Naive thymus-derived CD4-positive, alpha-beta T cell (primary cell): ENCODE measurements at regions of chr16 and their contacts with region 1.

Region 1: DNA sequence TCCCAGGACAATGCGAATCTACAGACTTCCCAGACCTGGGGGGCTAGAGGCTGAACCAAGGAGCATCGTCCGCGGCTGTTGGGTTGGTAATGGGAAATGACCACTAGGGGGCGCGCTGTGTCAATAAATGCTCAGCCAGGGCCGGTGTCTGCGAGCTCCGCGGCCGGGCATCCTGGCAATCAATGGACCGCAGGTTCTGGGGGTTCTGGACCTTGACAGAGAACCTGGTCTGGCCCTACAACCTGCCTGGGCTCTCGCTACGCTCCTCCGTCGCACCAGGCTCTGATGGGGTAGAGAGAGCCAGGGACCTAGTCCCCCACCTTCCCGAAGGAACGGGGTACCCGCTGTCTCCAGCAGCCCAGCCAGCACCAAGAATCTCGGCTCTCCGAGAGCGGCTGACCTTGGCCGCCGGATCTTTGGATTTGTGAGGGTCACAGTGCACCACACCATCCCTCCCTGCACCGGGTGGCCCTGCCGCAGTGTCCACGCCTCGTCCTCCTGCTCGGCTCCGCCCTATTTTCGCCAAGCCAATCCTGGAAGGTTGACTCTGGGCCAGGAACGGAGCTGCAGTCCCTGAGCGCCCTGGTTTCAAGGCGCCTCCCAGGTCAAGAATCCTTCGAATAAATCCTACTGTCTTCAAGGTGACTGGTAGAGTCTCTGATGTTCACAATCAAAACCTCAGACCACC is 20.4 kb upstream of the BEAN1 start:
- DNase-seq: peak; percentile 70 to 92 (median 84)
- ATAC-seq: peak; percentile 90
- H3K4me3 ChIP-seq: peak overlapping the region; percentile 76
- H3K4me3 Mint-ChIP-seq: peak overlapping the region; percentile 86 to 94 (median 89)
- H3K27ac ChIP-seq: no peak overlapping the region
- H3K27ac Mint-ChIP-seq: peak overlapping the region; percentile 34 to 97 (median 79)
- H3K4me1 ChIP-seq: peaks cover 19 to 27% of the 10 kb centered on the region in 2 donors
- H3K4me1 Mint-ChIP-seq: peaks cover 14 to 40% (median 33%) of the 10 kb centered on the region in 7 donors
- H3K27me3 ChIP-seq: no peaks in the 10 kb centered on the region
- H3K27me3 Mint-ChIP-seq: peaks cover 0 to 24% (median 5%) of the 10 kb centered on the region in 5 donors

Region 2: GRCh38 chr16:66304151-66304550 is 102.5 kb before region 1 on chr16:
- CTCF ChIA-PET with region 1: no interaction called
- POLR2A ChIA-PET with region 1: no interaction called
- intact Hi-C with region 1: no loop called
- DNase-seq: peak in 1 of 9 donors; percentile 7
- ATAC-seq: no peak
- H3K4me3 ChIP-seq: no peak overlapping the region
- H3K4me3 Mint-ChIP-seq: no peak overlapping the region
- H3K27ac ChIP-seq: no peak overlapping the region
- H3K27ac Mint-ChIP-seq: no peak overlapping the region
- H3K4me1 ChIP-seq: no peaks in the 10 kb centered on the region
- H3K4me1 Mint-ChIP-seq: peaks cover 0 to 11% (median 7%) of the 10 kb centered on the region in 7 donors
- H3K27me3 ChIP-seq: no peaks in the 10 kb centered on the region
- H3K27me3 Mint-ChIP-seq: peaks cover 0 to 14% (median 5%) of the 10 kb centered on the region in 5 donors

Region 3: GRCh38 chr16:66483689-66484481 is 77.2 kb after region 1 on chr16:
- CTCF ChIA-PET with region 1: interaction called, 84 read pairs
- POLR2A ChIA-PET with region 1: interaction called, 3 read pairs
- intact Hi-C with region 1: loop called (anchors 1 kb)
- DNase-seq: peak; percentile 55 to 79 (median 64)
- ATAC-seq: peak; percentile 84
- H3K4me3 ChIP-seq: no peak overlapping the region
- H3K4me3 Mint-ChIP-seq: peak overlapping the region in 1 of 10 donors; percentile 9
- H3K27ac ChIP-seq: no peak overlapping the region
- H3K27ac Mint-ChIP-seq: peak overlapping the region in 4 of 9 donors; percentile 44 to 88 (median 68)
- H3K4me1 ChIP-seq: peaks cover 7 to 8% of the 10 kb centered on the region in 2 donors
- H3K4me1 Mint-ChIP-seq: peaks cover 6 to 40% (median 17%) of the 10 kb centered on the region in 7 donors
- H3K27me3 ChIP-seq: no peaks in the 10 kb centered on the region
- H3K27me3 Mint-ChIP-seq: no peaks in the 10 kb centered on the region

Region 4: GRCh38 chr16:66552286-66553177 is 145.9 kb after region 1 on chr16 and contains the start of gene CKLF:
- CTCF ChIA-PET with region 1: interaction called, 4 read pairs
- POLR2A ChIA-PET with region 1: interaction called, 10 read pairs
- intact Hi-C with region 1: no loop called
- DNase-seq: peak; percentile 84 to 96 (median 92)
- ATAC-seq: peak; percentile 83
- H3K4me3 ChIP-seq: peak within 1 kb of the TSS; percentile 94
- H3K4me3 Mint-ChIP-seq: peak within 1 kb of the TSS; percentile 92 to 99 (median 95)
- H3K27ac ChIP-seq: peak within 1 kb of the TSS; percentile 77
- H3K27ac Mint-ChIP-seq: peak within 1 kb of the TSS; percentile 91 to 97 (median 94)
- H3K4me1 ChIP-seq: peaks cover 49 to 68% of the 10 kb centered on the region in 2 donors
- H3K4me1 Mint-ChIP-seq: peaks cover 59 to 85% (median 80%) of the 10 kb centered on the region in 7 donors
- H3K27me3 ChIP-seq: no peaks in the 10 kb centered on the region
- H3K27me3 Mint-ChIP-seq: peaks cover 0 to 2% (median 0%) of the 10 kb centered on the region in 5 donors
- total RNA-seq, gene CKLF: 24.1 to 160 (median 42.9) TPM

Region 5: GRCh38 chr16:66608241-66609138 is 201.8 kb after region 1 on chr16:
- CTCF ChIA-PET with region 1: interaction called, 7 read pairs
- POLR2A ChIA-PET with region 1: interaction called, 6 read pairs
- intact Hi-C with region 1: loop called (anchors 1 kb)
- DNase-seq: peak; percentile 66 to 85 (median 78)
- ATAC-seq: peak; percentile 52
- H3K4me3 ChIP-seq: no peak overlapping the region
- H3K4me3 Mint-ChIP-seq: peak overlapping the region in 8 of 10 donors; percentile 6 to 82 (median 34)
- H3K27ac ChIP-seq: peak overlapping the region; percentile 40
- H3K27ac Mint-ChIP-seq: peak overlapping the region in 8 of 9 donors; percentile 45 to 85 (median 79)
- H3K4me1 ChIP-seq: peaks cover 17 to 34% of the 10 kb centered on the region in 2 donors
- H3K4me1 Mint-ChIP-seq: peaks cover 19 to 37% (median 35%) of the 10 kb centered on the region in 7 donors
- H3K27me3 ChIP-seq: no peaks in the 10 kb centered on the region
- H3K27me3 Mint-ChIP-seq: peaks cover 0 to 3% (median 0%) of the 10 kb centered on the region in 5 donors

Region 6: GRCh38 chr16:66728117-66728787 is 321.6 kb after region 1 on chr16:
- CTCF ChIA-PET with region 1: interaction called, 4 read pairs
- POLR2A ChIA-PET with region 1: no interaction called
- intact Hi-C with region 1: loop called in 1 of 2 experiments (anchors 1 kb)
- DNase-seq: peak in 6 of 9 donors; percentile 26 to 56 (median 44)
- ATAC-seq: peak; percentile 92
- H3K4me3 ChIP-seq: no peak overlapping the region
- H3K4me3 Mint-ChIP-seq: no peak overlapping the region
- H3K27ac ChIP-seq: no peak overlapping the region
- H3K27ac Mint-ChIP-seq: peak overlapping the region in 6 of 9 donors; percentile 11 to 86 (median 72)
- H3K4me1 ChIP-seq: no peaks in the 10 kb centered on the region
- H3K4me1 Mint-ChIP-seq: peaks cover 5 to 9% (median 5%) of the 10 kb centered on the region in 7 donors
- H3K27me3 ChIP-seq: no peaks in the 10 kb centered on the region
- H3K27me3 Mint-ChIP-seq: no peaks in the 10 kb centered on the region

Region 7: DNA sequence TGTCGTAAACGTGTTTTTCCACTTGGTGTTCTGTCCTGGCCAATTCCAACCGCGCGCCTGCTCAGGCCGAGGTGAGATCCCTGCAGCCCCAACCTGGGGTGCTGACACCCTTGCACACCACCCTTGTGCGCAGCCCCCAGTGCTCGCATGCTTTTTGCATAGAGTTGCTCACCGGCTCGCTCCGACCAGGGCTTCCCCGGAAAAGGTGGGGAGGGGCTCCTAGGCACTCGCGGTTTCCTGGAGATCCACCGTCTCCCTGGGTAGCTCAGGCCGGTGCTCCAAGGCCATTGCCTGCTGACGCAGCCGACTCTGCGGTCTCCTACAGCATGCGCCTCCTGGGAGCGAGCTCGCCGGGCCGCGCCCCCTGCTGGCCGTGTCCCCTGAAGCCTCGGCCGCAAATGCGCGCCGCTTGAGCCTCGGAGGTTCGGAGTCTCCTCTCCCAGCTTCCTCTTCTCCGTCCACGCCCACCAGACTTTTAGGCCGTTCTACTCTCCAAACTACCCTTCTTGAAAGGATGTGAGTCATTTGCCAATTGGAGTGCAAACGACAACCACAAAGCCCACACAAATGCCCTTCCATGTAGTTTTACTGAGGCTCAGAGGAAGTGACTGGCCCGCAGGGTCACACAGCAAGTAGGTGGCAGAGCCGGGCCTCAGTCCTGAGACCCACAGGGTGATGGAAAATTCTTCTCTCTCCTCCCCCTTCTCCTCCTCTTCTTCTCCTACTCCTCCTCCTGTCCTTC is 466.4 kb after region 1 on chr16:
- CTCF ChIA-PET with region 1: interaction called, 19 read pairs
- POLR2A ChIA-PET with region 1: interaction called, 3 read pairs
- intact Hi-C with region 1: loop called in 1 of 2 experiments (anchors 1 kb)
- DNase-seq: peak; percentile 62 to 93 (median 77)
- ATAC-seq: peak; percentile 95
- H3K4me3 ChIP-seq: peak overlapping the region; percentile 48
- H3K4me3 Mint-ChIP-seq: peak overlapping the region; percentile 77 to 94 (median 82)
- H3K27ac ChIP-seq: peak overlapping the region; percentile 18
- H3K27ac Mint-ChIP-seq: peak overlapping the region; percentile 7 to 93 (median 60)
- H3K4me1 ChIP-seq: peaks cover 5 to 6% of the 10 kb centered on the region in 2 donors
- H3K4me1 Mint-ChIP-seq: peaks cover 7 to 49% (median 14%) of the 10 kb centered on the region in 7 donors
- H3K27me3 ChIP-seq: no peaks in the 10 kb centered on the region
- H3K27me3 Mint-ChIP-seq: no peaks in the 10 kb centered on the region